ENCODE measurements at regions of chr12 and their contacts with region 1.

Region 1: GRCh38 chr12:49866859-49867579 is 24.1 kb upstream of the BCDIN3D start:
- DNase-seq: peak; percentile 46
- ATAC-seq: peak; percentile 25; the same call in 1 of the 2 replicates
- H3K4me3 ChIP-seq: no peak overlapping the region
- H3K27ac ChIP-seq: no peak overlapping the region
- H3K4me1 ChIP-seq: peaks cover 23% of the 10 kb centered on the region
- H3K27me3 ChIP-seq: peaks cover 22% of the 10 kb centered on the region
- CTCF ChIP-seq: peak; percentile 83
- POLR2A ChIP-seq: no peak
- RAD21 ChIP-seq: peak; percentile 86

Region 2: GRCh38 chr12:49548822-49549648 is 318.0 kb before region 1 on chr12:
- CTCF ChIA-PET with region 1: no interaction called
- POLR2A ChIA-PET with region 1: no interaction called
- dilution Hi-C with region 1: no loop called
- in situ Hi-C with region 1: no loop called
- intact Hi-C with region 1: no loop called
- DNase-seq: no peak
- ATAC-seq: peak; percentile 44
- H3K4me3 ChIP-seq: no peak overlapping the region; the same call in 1 of the 2 replicates
- H3K27ac ChIP-seq: no peak overlapping the region
- H3K4me1 ChIP-seq: peaks cover 3% of the 10 kb centered on the region; the same call in 1 of the 2 replicates
- H3K27me3 ChIP-seq: peaks cover 79% of the 10 kb centered on the region
- CTCF ChIP-seq: peak; percentile 36
- POLR2A ChIP-seq: no peak
- RAD21 ChIP-seq: no peak

Region 3: GRCh38 chr12:49954863-49955830 is 88.1 kb after region 1 on chr12:
- CTCF ChIA-PET with region 1: no interaction called
- POLR2A ChIA-PET with region 1: no interaction called
- dilution Hi-C with region 1: no loop called
- in situ Hi-C with region 1: loop called (anchors 5 kb)
- intact Hi-C with region 1: no loop called
- DNase-seq: no peak
- ATAC-seq: no peak; the same call in 1 of the 2 replicates
- H3K4me3 ChIP-seq: no peak overlapping the region
- H3K27ac ChIP-seq: no peak overlapping the region
- H3K4me1 ChIP-seq: no peaks in the 10 kb centered on the region
- H3K27me3 ChIP-seq: peaks cover 86% of the 10 kb centered on the region
- CTCF ChIP-seq: no peak
- POLR2A ChIP-seq: no peak
- RAD21 ChIP-seq: no peak

Region 4: GRCh38 chr12:50050410-50051098 is 183.5 kb after region 1 on chr12:
- CTCF ChIA-PET with region 1: interaction called, 3 read pairs
- POLR2A ChIA-PET with region 1: no interaction called
- dilution Hi-C with region 1: no loop called
- in situ Hi-C with region 1: loop called (anchors 5 kb)
- intact Hi-C with region 1: no loop called
- DNase-seq: peak; percentile 47
- ATAC-seq: peak; percentile 88
- H3K4me3 ChIP-seq: no peak overlapping the region
- H3K27ac ChIP-seq: no peak overlapping the region
- H3K4me1 ChIP-seq: no peaks in the 10 kb centered on the region
- H3K27me3 ChIP-seq: peaks cover 53% of the 10 kb centered on the region
- CTCF ChIP-seq: no peak
- POLR2A ChIP-seq: no peak
- RAD21 ChIP-seq: no peak